Natural killer cell (primary cell): ENCODE measurements at regions of chr14 and their contacts with region 1.

Region 1: GRCh38 chr14:88005978-88006851 is 1.3 kb downstream of the GPR65 start:
- DNase-seq: peak; percentile 57 to 92
- ATAC-seq: peak; percentile 79 to 92 (median 90)
- H3K4me3 ChIP-seq: peak overlapping the region; percentile 78
- H3K4me3 Mint-ChIP-seq: peak overlapping the region; percentile 84
- H3K27ac ChIP-seq: peak overlapping the region; percentile 99
- H3K27ac Mint-ChIP-seq: peak overlapping the region; percentile 96 to 98
- H3K4me1 ChIP-seq: peaks cover 33% of the 10 kb centered on the region
- H3K4me1 Mint-ChIP-seq: peaks cover 68 to 74% of the 10 kb centered on the region in 2 donors
- H3K27me3 ChIP-seq: no peaks in the 10 kb centered on the region
- H3K27me3 Mint-ChIP-seq: no peaks in the 10 kb centered on the region
- CTCF ChIP-seq: no peak

Region 2: DNA sequence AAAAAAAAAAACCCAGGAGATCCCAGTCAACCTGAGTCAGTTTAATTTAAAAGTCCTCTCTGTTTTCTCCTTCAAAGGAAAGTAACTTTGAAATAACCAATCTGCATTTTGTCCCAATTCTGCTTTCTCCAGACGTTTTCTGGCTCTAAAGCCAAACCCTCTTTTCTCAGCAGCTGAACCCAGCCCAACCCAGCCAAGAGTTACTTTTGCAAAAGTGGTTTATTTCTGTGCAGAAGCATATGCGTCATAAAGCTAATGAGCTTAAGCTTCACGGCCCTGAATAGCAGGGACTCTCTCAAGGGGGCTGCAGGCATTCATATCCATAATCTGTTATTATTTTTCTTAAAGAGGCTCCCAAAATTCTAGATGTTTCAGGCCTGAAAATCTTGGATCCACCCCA is 189.8 kb before region 1 on chr14:
- intact Hi-C with region 1: no loop called
- DNase-seq: no peak
- ATAC-seq: no peak
- H3K4me3 ChIP-seq: no peak overlapping the region
- H3K4me3 Mint-ChIP-seq: no peak overlapping the region
- H3K27ac ChIP-seq: no peak overlapping the region
- H3K27ac Mint-ChIP-seq: no peak overlapping the region
- H3K4me1 ChIP-seq: no peaks in the 10 kb centered on the region
- H3K4me1 Mint-ChIP-seq: peaks cover 7 to 9% of the 10 kb centered on the region in 2 donors
- H3K27me3 ChIP-seq: no peaks in the 10 kb centered on the region
- H3K27me3 Mint-ChIP-seq: peaks cover 0 to 10% of the 10 kb centered on the region in 2 donors
- CTCF ChIP-seq: no peak

Region 3: DNA sequence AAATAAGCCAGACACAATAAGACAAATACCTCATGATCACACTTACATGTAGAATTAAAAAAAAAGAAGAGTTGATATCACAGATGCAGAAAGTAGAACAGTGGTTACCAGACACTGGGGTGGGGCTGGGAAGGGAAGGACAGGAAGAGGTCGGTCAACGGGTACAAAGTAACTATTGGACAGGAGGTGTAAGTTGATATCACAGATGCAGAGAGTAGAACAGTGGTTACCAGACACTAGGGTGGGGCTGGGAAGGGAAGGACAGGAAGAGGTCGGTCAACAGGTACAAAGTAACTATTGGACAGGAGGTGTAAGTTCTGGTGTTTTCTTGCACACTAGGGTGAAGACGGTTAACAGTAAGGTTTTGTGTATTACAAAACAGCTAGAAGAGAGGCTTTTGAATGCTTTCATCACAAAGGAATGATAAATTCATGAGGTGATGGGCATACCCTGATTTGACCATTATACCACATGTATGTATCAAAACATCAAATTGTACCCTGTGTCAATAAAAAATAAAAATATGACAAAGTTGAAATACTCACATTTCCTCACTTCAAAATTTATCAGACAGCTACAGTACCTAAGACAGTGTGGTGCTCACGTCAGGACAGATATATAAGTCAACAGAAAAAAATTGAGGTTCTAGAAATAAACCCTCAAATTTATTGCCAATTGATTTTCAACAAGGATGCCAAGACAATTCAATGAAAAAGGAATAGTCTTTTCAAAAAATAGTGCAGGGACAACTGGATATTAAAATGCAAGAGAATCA is 46.0 kb before region 1 on chr14:
- intact Hi-C with region 1: loop called (anchors 1 kb)
- DNase-seq: peak; percentile 18 to 65
- ATAC-seq: peak; percentile 77 to 89 (median 83)
- H3K4me3 ChIP-seq: no peak overlapping the region
- H3K4me3 Mint-ChIP-seq: peak overlapping the region; percentile 74
- H3K27ac ChIP-seq: peak overlapping the region; percentile 79
- H3K27ac Mint-ChIP-seq: peak overlapping the region; percentile 92 to 98
- H3K4me1 ChIP-seq: peaks cover 12% of the 10 kb centered on the region
- H3K4me1 Mint-ChIP-seq: peaks cover 68 to 71% of the 10 kb centered on the region in 2 donors
- H3K27me3 ChIP-seq: no peaks in the 10 kb centered on the region
- H3K27me3 Mint-ChIP-seq: no peaks in the 10 kb centered on the region
- CTCF ChIP-seq: no peak